Ovary (tissue), 10 donors: ENCODE measurements at regions of chr7 and their contacts with region 1.

Region 1: DNA sequence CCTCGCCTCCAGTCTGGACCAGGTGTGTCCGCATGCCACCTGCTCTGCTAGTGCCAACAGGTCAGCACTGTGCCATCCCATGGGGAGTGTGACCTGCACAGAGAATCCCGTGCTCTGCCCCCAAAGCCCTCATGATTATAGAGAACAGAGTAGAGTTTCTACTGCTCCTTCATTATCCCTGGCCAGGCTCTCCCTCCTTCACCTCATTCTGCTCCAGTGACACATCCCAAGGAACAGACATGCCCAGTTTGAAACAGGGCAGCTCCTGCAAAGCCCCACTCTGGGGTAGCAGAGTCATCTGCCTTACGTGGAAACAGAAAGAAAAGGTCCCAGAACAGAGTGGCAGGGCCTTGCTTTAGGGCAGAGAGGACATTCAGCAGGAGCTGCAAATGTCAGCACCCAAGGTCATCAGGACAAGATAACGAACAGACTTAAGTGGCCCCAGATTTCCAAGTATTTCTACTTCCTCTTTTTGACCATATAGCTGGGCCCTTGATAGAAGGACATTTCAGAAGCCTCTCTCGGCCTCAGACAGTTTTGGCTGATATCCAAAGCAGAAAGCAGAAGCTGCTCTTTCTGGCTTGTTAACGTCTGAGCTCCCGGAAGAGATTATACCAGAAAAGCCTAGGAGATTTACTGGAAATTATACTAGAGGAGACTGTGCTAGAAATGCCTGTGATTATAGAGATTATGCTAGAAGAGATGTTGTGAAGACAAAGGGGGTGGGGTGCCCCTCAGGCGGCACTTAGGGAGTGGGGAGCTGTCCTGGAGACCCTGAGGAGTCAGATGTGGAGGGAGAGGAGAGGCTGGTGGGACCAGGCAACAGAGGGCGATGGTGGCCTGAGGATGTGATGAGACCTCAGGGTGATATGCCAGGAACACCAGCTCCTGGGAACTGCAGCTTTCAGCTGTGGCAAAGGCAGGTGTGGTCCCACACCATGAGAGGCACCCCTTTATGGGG is 12.6 kb downstream of the TMEM176B start:
- DNase-seq: peak in 1 of 5 donors; percentile 27
- H3K4me3 ChIP-seq: no peak overlapping the region
- H3K27ac ChIP-seq: peak overlapping the region; percentile 64 to 72
- H3K4me1 ChIP-seq: peaks cover 6% of the 10 kb centered on the region
- H3K27me3 ChIP-seq: no peaks in the 10 kb centered on the region
- CTCF ChIP-seq: no peak
- EP300 ChIP-seq: no peak
- POLR2A ChIP-seq: no peak

Region 2: DNA sequence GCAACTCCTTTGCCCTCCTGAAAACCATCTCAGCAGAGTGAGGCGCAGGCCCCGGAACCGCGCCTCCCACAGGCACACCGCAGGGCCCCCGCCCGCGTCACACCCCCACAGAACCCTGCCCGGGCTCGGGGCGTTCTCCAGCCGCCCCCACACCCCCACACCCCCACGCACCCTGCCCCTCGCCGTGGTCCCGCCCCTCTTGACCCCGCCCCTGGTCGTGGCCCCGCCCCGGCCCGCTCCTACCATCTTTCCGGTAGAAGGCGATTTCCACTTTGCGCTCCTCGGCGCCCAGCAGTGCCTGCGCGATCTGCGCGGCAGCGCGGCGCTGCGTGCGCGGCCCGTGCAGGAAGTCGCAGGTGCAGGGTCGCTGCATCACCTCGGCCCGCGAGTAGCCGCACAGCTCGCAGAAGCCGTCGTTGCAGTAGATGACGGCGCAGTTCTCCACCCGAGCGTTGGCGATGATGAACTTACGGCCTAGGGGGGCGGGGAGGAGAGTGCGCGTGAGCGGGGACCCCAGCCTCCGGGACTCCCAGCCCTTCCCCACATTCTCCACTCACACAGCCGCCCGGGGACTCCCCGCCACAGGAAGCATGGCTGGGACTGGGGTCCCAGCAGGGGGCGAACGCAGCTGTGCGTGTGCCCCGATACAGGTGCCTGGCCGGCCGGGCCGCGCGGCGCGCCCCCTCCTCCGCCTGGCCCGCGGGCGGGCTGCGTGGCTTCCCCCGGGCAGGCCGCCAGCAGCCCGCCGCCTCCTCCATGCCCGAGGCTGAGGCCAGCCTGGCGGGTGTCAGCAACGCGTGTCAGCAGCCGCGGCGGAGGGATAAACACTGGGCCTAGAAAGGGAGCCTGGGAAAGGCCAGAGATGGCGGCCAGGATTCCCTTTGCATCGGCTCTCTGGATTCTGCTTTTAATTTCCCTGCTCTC is 187.1 kb after region 1 on chr7:
- intact Hi-C with region 1: loop called in 1 of 4 experiments (anchors 10 kb)
- DNase-seq: peak in 4 of 5 donors; percentile 66 to 79 (median 70)
- H3K4me3 ChIP-seq: peak overlapping the region; percentile 37
- H3K27ac ChIP-seq: peak overlapping the region in 1 of 2 donors; percentile 18
- H3K4me1 ChIP-seq: peaks cover 38% of the 10 kb centered on the region
- H3K27me3 ChIP-seq: no peaks in the 10 kb centered on the region
- CTCF ChIP-seq: peak; percentile 10 to 66 (median 42)
- EP300 ChIP-seq: no peak
- POLR2A ChIP-seq: no peak